Heart left ventricle (tissue), 16 donors: ENCODE measurements at regions of chr1 and their contacts with region 1.

Region 1: GRCh38 chr1:39538588-39539465 is 37.8 kb downstream of the PABPC4 start:
- DNase-seq: peak in 4 of 5 donors; percentile 71 to 72 (median 72)
- ATAC-seq: peak; percentile 76 to 86 (median 82)
- H3K4me3 ChIP-seq: no peak overlapping the region
- H3K27ac ChIP-seq: no peak overlapping the region
- H3K4me1 ChIP-seq: peaks cover 0 to 30% (median 12%) of the 10 kb centered on the region in 12 donors
- H3K27me3 ChIP-seq: no peaks in the 10 kb centered on the region
- CTCF ChIP-seq: peak; percentile 85 to 95 (median 92)
- POLR2A ChIP-seq: no peak

Region 2: DNA sequence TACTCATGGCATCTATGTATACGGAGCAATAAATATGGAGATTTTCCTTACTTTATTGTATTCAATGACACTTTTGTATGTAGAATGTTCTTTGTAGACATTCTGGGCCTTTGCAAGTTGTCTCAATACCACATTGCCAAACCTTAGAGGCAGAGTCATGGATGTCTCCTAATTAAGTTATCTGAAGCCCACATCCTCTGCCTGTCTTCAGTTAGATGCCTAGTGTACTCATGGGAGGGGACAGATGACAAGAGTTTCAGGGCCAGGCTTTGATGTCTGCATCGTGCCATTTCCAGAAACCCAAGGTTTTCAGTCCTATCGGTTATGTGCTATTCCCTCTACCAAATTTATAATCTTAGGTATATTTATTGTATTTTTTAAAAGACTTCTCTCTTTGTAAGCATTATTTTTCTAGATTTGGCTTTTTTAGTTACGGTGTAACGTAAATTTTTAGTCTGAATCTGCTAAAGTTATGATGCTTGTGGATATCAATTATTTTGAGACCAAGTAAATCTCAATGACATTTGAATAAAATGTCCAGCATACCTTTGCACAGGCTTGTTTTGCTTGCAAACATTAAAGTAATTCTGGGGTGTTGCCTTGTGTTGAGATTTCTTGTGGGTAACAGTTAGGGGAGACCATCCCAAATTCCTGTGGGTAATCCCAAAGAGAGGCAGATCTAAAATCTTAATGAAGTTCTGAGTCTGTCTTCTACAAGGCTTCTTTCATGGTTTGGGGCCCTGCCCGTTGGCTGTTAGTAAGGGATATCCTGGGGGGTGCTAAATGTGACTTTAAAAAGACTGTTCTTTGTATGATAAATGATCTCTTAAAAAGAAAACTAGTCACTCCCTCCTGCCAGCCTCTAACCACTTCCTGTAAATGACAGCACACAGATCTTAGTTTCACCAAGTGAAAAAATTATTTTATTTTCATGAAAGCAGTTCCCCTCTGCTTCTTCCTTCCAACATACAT is 342.3 kb before region 1 on chr1:
- intact Hi-C with region 1: loop called in 1 of 10 experiments (anchors 5 kb)
- DNase-seq: no peak
- ATAC-seq: no peak
- H3K4me3 ChIP-seq: peak overlapping the region in 1 of 12 donors; percentile 15
- H3K27ac ChIP-seq: peak overlapping the region in 5 of 12 donors; percentile 21 to 91 (median 41)
- H3K4me1 ChIP-seq: peaks cover 8 to 67% (median 37%) of the 10 kb centered on the region in 12 donors
- H3K27me3 ChIP-seq: no peaks in the 10 kb centered on the region
- CTCF ChIP-seq: no peak
- POLR2A ChIP-seq: no peak

Region 3: DNA sequence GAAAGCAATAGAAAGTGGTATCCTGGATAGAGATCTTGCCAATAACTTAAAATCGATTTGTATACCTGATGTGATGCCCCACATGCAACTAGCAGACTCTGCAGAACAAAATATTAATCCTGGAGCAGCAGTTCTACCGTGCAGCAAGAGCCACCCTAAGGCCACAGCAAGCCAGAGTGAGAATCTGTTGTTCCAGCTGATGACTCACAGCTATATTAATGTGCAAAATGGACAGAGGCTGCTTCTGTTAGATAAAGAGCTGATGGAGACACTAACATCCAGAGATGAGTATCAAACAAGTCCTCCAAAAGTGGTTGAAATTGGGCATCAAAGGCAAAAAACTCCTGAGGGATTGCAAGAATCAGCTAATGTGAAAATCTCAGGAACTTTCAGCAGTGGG is 206.5 kb before region 1 on chr1:
- intact Hi-C with region 1: loop called in 1 of 10 experiments (anchors 10 kb)
- DNase-seq: no peak
- ATAC-seq: no peak
- H3K4me3 ChIP-seq: no peak overlapping the region
- H3K27ac ChIP-seq: no peak overlapping the region
- H3K4me1 ChIP-seq: peaks cover 0 to 21% (median 0%) of the 10 kb centered on the region in 12 donors
- H3K27me3 ChIP-seq: no peaks in the 10 kb centered on the region
- CTCF ChIP-seq: no peak
- POLR2A ChIP-seq: no peak

Region 4: DNA sequence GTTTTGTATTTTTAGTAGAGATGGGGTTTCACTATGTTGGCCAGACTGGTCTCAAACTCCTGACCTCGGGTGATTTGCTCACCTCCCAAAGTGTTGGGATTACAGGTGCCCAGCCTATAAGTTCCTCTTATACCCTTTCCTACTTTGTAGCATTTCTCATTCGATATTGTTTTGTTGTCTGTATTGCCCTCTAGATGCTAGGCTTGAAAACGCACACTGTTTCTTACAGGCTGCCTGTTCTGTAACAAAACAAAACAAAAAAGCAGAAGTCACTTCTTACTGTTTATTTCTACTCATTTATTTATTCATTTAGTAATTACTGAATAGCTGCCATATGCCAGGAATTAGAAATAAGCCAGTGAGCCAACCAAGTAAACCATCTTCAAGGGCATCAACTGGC is 184.3 kb before region 1 on chr1:
- intact Hi-C with region 1: loop called in 2 of 10 experiments (anchors 10 kb)
- DNase-seq: no peak
- ATAC-seq: no peak
- H3K4me3 ChIP-seq: no peak overlapping the region
- H3K27ac ChIP-seq: no peak overlapping the region
- H3K4me1 ChIP-seq: peaks cover 0 to 17% (median 9%) of the 10 kb centered on the region in 12 donors
- H3K27me3 ChIP-seq: no peaks in the 10 kb centered on the region
- CTCF ChIP-seq: peak in 1 of 12 donors; percentile 8
- POLR2A ChIP-seq: no peak

Region 5: GRCh38 chr1:39474810-39475209 is 64.0 kb before region 1 on chr1:
- intact Hi-C with region 1: loop called in 5 of 10 experiments (anchors 5 to 10 kb)
- DNase-seq: peak in 4 of 5 donors; percentile 41 to 74 (median 56)
- ATAC-seq: peak; percentile 85 to 92 (median 86)
- H3K4me3 ChIP-seq: no peak overlapping the region
- H3K27ac ChIP-seq: peak overlapping the region in 11 of 12 donors; percentile 23 to 75 (median 60)
- H3K4me1 ChIP-seq: peaks cover 0 to 17% (median 0%) of the 10 kb centered on the region in 12 donors
- H3K27me3 ChIP-seq: no peaks in the 10 kb centered on the region
- CTCF ChIP-seq: no peak
- POLR2A ChIP-seq: no peak

Region 6: DNA sequence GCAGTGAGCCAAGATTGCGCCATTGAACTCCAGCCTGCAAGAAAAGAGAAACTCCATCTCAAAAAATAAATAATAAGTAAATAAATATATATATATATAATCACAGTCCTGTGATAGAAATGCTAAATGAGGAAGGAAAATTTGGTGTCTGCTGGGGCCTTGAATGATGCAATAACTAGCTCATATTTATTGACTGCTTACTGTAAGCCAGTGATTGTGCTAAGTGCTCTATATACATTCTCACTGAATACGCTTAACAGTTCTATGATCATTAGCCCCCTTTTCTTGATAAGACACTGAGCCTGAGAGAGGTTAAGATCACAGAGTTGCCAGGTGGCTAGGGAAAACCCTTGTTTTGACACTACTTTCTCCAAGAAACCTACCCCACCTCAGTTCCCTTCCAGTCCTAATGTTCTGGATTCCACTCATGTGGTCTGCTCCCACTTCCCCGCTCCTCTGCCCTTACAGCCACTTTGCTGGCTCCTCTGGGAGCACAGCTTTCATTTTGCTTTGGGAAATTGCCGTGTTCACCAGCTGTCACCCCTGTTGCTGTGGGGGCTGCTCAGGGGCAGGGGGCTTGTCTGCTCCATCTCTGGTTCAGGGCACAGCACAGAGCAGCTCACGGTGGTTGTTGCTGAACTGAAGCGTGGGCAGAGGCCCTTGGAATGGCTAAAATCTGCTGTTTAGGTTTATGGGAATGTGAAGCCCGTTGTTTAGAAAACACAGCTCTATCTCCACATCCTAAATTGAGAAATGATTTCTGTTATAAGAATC is 49.8 kb before region 1 on chr1:
- intact Hi-C with region 1: loop called in 4 of 10 experiments (anchors 5 to 10 kb)
- DNase-seq: no peak
- ATAC-seq: no peak
- H3K4me3 ChIP-seq: no peak overlapping the region
- H3K27ac ChIP-seq: no peak overlapping the region
- H3K4me1 ChIP-seq: peaks cover 0 to 25% (median 5%) of the 10 kb centered on the region in 12 donors
- H3K27me3 ChIP-seq: peaks cover 0 to 27% (median 9%) of the 10 kb centered on the region in 9 donors
- CTCF ChIP-seq: no peak
- POLR2A ChIP-seq: no peak

Region 7: DNA sequence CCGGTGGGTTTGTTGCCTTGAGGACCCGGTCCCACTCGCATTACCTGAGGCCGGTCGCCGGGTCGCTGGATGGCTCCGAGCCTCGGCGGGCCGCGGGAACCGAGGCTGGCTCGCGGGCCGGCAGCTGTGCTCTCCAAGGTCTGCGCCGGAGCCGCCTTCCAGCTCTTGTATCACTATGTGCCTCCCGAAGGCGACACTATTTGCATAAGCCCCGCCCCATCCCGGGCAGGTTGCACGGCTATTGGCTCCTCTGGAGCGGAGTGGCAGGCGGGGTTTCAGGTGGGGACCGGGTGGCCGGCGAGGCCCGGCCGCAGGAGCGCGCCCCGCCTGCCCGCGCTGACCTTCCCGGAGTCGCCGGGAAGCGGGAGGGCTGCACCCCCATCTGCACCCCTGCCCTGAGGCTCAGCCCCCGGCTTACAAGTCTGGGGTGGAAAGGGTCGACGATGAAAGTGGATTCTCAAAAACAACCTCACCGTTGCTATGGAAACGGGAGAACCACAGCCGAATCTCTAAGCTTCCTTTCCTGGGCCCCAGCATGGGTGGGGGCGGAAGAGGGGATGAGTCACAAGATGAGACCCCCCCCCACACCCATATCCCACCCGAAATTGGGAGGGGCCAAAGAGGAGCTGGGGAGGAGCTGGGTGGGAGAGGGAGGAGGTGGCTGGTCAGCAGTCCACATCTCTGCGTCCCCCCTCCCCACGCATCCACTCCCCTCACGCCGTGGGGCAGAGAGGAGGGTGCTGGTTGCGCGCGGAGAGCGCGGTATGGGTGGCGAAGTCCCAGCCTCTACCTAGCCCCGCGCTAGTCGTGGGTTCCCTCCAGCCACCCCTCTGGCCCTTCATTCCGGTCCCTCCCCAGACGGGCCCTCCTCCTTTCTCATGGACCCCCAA is 152.7 kb after region 1 on chr1 and contains the start of gene HPCAL4:
- intact Hi-C with region 1: no loop called
- DNase-seq: peak; percentile 86 to 93 (median 90)
- ATAC-seq: peak; percentile 92 to 99 (median 98)
- H3K4me3 ChIP-seq: peak within 1 kb of the TSS in 11 of 12 donors; percentile 15 to 57 (median 40)
- H3K27ac ChIP-seq: no peak within 1 kb of the TSS
- H3K4me1 ChIP-seq: peaks cover 2 to 27% (median 16%) of the 10 kb centered on the region in 12 donors
- H3K27me3 ChIP-seq: peaks cover 0 to 74% (median 26%) of the 10 kb centered on the region in 9 donors
- CTCF ChIP-seq: no peak
- POLR2A ChIP-seq: no peak
- total RNA-seq, gene HPCAL4: 0.12 to 1.2 (median 0.39) TPM